Activated T-helper 2 cell treated with anti-CD3 and anti-CD28 coated beads, Interferon-gamma antibody, Interleukin-2, Interleukin-4, amounts not matched to agents 10 μg/mL and 5 μg/mL and 100 μg/mL, durations not matched to agents 14 hours and 24 hours and 36 hours (primary cell): ENCODE measurements at regions of chr22 and their contacts with region 1.

Region 1: DNA sequence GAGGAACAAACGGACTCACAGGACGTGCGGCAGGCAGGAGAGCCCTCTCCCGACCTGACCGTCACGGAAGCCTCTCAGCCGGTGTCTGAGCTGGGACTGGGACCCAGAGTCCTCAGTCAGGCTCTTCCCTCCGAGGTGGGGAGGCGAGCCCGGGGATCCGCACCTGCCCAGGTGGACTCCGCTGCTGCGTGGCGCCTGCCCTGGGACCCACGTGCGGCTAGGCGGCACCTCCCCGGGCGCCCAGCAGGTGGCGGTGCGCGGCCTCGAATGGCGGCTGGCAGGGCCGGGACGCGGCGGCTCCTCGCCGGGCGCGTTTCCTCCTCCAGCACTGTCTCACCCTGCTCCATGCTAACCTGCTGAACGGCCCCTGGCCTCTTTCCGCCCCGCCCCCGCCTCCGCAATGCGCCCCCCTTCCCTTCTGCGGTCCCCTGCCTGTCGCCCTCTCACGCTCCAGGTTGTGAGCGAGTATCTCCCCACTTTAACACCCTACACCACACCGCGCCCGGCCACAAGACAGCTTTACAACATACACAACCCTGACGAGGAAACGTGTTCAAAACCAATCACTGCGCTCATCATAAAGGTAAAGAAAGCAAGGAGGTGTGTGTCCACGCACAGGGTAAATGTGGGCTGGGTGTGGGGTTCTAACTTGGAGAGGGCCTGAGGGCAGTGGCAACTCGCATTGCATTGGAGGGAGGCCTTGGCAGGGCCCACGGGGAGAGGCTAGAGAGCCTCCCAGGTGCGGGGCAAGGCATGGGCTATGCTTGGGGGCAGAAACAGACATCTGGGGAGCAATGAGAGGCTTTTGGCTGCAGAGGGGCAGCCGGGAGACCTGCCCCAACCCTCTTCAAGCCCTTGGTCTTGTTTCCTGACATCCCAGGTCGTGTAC is 25.9 kb upstream of the ATXN10 start:
- DNase-seq: peak; percentile 66
- H3K4me3 Mint-ChIP-seq: no peak overlapping the region
- H3K27ac Mint-ChIP-seq: no peak overlapping the region
- H3K4me1 Mint-ChIP-seq: peaks cover 8% of the 10 kb centered on the region
- H3K27me3 Mint-ChIP-seq: peaks cover 43% of the 10 kb centered on the region

Region 2: DNA sequence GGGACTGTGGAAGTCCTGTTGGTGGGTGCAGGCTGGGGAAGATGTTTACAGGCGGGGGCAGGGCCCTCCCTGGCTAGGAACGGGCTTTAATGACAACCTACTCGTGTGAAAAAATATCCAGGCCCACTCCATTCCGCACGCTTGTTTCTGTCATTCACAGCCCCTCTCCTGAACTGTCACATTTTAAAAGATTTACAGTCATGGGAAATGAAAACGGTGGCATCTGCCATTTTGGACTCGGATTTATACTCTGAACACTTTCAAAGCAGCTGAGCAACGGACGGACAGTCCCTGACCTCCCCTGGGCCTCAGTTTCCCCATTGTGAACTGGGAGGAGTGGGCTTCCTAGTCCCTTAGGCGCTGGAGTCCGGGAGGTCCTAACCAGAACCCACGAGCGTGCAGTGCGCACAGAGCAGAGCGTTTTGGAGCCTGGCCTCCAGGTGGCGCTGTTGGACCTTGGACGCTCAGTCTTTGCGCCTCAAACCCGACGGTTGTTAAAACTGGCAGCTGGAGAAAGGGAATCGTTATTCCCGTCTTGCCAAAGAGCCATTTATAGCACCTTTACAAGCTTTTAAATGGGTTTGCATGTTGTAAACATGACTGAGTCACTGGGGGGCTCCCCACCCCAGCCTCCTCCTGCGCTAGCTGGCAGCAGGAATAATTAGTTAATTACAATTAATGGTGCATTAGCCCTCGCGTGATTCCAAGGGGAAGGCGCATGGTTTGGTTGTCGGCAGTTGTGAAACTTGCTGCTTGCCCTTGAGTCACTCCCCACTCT is 67.8 kb before region 1 on chr22:
- intact Hi-C with region 1: loop called (anchors 5 kb)
- DNase-seq: peak; percentile 54
- H3K4me3 Mint-ChIP-seq: no peak overlapping the region
- H3K27ac Mint-ChIP-seq: no peak overlapping the region
- H3K4me1 Mint-ChIP-seq: no peaks in the 10 kb centered on the region
- H3K27me3 Mint-ChIP-seq: no peaks in the 10 kb centered on the region

Region 3: DNA sequence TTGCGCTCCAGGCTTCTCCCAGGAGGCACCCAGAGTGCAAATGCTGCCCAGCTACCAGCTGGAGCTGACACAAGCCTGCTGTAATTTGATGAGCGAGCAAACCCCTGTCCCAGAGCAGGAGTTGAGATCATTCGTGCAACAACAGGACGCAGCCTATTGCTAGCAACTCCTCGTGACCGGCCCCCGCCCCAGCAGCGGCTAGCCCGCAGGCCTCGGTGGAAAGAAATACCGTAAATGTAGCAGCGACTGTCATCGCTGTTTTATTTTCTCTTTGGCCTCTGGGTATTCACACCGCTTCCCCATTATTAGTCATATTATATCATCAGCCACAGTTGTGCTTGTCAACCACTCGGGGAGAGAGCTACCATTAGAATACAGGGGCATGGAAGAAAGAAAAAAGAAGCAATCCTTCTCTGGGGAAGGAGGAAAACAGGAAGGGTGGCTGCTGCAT is 33.3 kb before region 1 on chr22:
- intact Hi-C with region 1: no loop called
- DNase-seq: no peak
- H3K4me3 Mint-ChIP-seq: no peak overlapping the region
- H3K27ac Mint-ChIP-seq: peak overlapping the region; percentile 7
- H3K4me1 Mint-ChIP-seq: peaks cover 9% of the 10 kb centered on the region
- H3K27me3 Mint-ChIP-seq: no peaks in the 10 kb centered on the region

Region 4: DNA sequence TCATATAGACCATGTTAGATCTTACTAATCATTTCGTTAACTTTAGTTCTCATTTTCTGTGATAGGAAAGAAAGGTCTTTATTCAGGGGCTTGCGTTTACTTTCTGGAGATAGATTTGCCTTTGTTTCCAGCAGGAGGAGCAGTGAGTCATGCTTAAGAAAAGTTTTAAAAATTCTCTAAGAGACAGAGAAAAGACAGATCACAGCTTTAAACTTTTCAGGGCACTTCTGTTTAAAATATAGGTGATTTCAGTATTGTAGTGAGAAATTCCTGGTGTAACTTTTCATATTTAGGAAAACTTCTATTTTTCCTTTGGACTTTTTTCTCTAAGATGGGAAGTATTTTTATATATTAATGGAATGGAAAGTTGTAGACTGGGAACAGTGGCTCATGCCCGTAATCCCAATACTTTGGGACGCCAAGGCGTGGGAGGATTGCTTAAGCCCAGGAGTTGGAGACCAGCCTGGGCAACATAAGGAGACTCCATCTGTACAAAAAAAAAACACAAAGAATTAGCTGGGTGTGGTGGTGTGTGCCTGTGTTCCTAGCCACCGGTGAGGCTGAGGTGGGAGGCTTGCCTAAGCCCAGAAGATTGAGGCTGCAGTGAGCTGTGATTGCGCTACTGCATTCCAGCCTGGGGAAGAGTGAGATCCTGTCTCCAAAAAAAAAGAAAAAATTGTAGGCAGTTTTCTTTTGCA is 86.2 kb after region 1 on chr22:
- intact Hi-C with region 1: no loop called
- DNase-seq: no peak
- H3K4me3 Mint-ChIP-seq: no peak overlapping the region
- H3K27ac Mint-ChIP-seq: no peak overlapping the region
- H3K4me1 Mint-ChIP-seq: peaks cover 5% of the 10 kb centered on the region
- H3K27me3 Mint-ChIP-seq: no peaks in the 10 kb centered on the region

Region 5: DNA sequence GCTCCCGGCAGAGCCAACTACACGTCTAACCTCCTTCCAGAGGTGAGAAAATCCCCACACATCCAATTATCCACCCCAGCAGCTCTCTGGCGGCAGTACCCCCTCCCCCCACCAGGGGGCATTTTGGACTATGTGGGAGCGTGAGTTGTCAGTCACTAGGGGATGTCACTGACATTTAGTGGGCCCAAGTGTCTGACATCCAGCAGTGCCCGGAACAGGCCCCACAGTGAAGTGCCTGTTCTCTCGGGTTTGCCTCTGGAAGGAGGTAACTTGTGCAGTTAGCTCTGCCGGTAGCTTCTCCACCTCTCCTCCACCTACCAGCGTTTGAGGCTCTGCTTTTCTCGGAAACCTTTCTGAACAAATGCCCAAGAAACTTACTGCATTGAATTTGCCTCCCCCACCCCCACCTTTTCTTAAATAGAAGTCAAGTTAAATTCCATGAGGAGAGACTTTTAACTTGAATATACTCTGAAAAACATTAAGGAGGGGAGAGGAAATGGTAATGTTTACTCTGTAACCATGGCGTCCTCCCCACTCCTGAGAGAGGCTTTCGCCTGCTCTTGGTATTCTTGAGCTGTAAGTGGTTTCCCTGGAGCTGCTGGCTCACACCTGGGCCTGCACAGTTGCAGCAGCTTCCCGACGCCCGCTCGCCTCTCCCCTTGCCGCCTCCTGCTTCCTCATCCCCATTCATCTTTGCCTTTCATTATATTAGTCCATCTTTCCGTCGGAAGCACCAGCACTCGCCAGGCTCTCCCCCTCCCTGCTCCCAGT is 218.4 kb after region 1 on chr22:
- intact Hi-C with region 1: loop called (anchors 5 kb)
- DNase-seq: peak; percentile 48
- H3K4me3 Mint-ChIP-seq: no peak overlapping the region
- H3K27ac Mint-ChIP-seq: no peak overlapping the region
- H3K4me1 Mint-ChIP-seq: peaks cover 1% of the 10 kb centered on the region
- H3K27me3 Mint-ChIP-seq: peaks cover 43% of the 10 kb centered on the region

Region 6: DNA sequence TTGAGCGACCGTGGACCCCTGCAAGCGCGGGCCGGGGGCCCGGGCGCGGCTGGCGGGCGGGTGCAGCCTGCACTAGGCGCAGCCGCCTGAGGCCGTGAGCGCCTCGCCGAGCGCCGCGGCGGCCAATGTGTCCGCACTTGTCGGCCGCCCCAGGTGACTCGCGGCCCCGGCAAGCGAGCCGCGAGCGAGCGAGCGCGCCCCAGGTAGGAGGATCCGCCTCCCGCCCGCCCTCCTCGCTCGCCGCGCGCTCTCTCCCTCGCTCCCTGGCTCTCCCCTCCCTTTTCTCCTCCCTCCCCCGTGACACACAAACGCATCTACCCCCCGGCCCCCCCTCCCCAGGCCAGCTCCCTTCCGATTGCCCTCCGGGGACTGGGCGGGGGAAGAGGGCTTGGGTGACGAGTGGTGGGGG is 331.2 kb after region 1 on chr22 and contains the start of gene WNT7B:
- intact Hi-C with region 1: loop called (anchors 1 kb)
- DNase-seq: no peak
- H3K4me3 Mint-ChIP-seq: no peak within 1 kb of the TSS
- H3K27ac Mint-ChIP-seq: no peak within 1 kb of the TSS
- H3K4me1 Mint-ChIP-seq: no peaks in the 10 kb centered on the region
- H3K27me3 Mint-ChIP-seq: peaks cover 36% of the 10 kb centered on the region
- total RNA-seq, gene WNT7B: not detected in 2 replicates